Posterior vena cava (tissue), 2 donors: ENCODE measurements at regions of chr14 and their contacts with region 1.

Region 1: GRCh38 chr14:52926953-52927352 is 23.9 kb downstream of the FERMT2 start:
- DNase-seq: no peak

Region 2: DNA sequence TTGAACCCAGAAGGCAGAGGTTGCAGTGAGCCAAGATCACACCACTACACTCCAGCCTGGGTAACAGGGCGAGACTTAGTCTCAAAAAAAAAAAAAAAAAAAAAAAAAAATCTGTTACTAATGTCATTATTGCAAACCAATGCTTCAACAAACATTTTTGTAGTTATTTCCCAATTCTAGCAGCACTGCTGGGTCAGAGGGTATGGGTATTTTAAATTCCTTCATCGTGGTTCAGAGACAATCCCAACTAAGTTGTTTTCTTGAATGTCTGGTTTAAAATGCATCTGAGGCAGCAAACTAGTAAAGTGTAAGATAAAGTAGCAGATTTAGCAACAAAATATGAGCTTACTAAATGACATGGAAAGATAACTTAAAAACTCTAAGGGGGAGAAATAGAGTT is 41.7 kb before region 1 on chr14:
- intact Hi-C with region 1: loop called in 1 of 2 experiments (anchors 5 kb)
- DNase-seq: no peak

Region 3: GRCh38 chr14:53295985-53296582 is 369.1 kb after region 1 on chr14:
- intact Hi-C with region 1: no loop called
- DNase-seq: no peak